ENCODE measurements at regions of chr16 and their contacts with region 1.

Region 1: DNA sequence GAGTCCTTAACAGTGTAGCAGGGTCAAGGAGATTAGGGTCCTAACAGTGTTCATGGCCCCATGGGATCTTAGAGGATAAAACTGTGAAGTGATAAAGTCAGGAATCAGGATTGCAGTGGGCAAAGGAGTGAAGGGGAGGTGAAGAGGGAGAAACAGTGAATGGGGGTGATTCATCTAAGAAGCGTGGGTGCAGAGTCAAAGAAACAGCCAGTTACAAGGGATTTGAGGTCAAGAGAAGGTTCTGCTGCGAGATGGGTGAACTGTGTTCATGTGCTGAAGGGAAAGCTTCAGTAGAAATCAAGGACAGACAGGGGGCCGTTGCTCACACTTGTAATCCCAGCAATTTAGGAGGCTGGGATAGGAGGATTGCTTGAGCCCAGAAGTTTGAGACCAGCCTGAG is 5.9 kb downstream of the GTF3C1 start:
- DNase-seq: no peak
- ATAC-seq: no peak
- H3K4me3 ChIP-seq: no peak overlapping the region
- H3K27ac ChIP-seq: no peak overlapping the region
- H3K4me1 ChIP-seq: peaks cover 7% of the 10 kb centered on the region
- H3K27me3 ChIP-seq: no peaks in the 10 kb centered on the region
- CTCF ChIP-seq: no peak
- POLR2A ChIP-seq: no peak
- RAD21 ChIP-seq: no peak

Region 2: GRCh38 chr16:27476240-27476639 is 67.6 kb before region 1 on chr16:
- CTCF ChIA-PET with region 1: no interaction called
- POLR2A ChIA-PET with region 1: no interaction called
- dilution Hi-C with region 1: no loop called
- in situ Hi-C with region 1: no loop called
- intact Hi-C with region 1: no loop called
- DNase-seq: peak; percentile 17
- ATAC-seq: no peak; the same call in 1 of the 2 replicates
- H3K4me3 ChIP-seq: no peak overlapping the region
- H3K27ac ChIP-seq: peak overlapping the region; percentile 51
- H3K4me1 ChIP-seq: peaks cover 12% of the 10 kb centered on the region
- H3K27me3 ChIP-seq: no peaks in the 10 kb centered on the region
- CTCF ChIP-seq: no peak
- POLR2A ChIP-seq: no peak
- RAD21 ChIP-seq: no peak

Region 3: GRCh38 chr16:27491894-27492587 is 51.8 kb before region 1 on chr16:
- CTCF ChIA-PET with region 1: no interaction called
- POLR2A ChIA-PET with region 1: no interaction called
- dilution Hi-C with region 1: no loop called
- in situ Hi-C with region 1: no loop called
- intact Hi-C with region 1: loop called (anchors 5 kb)
- DNase-seq: no peak
- ATAC-seq: no peak
- H3K4me3 ChIP-seq: no peak overlapping the region
- H3K27ac ChIP-seq: no peak overlapping the region
- H3K4me1 ChIP-seq: peaks cover 12% of the 10 kb centered on the region
- H3K27me3 ChIP-seq: no peaks in the 10 kb centered on the region
- CTCF ChIP-seq: no peak
- POLR2A ChIP-seq: no peak
- RAD21 ChIP-seq: no peak